Heart left ventricle (tissue), 16 donors: ENCODE measurements at regions of chr19 and their contacts with region 1.

Region 1: DNA sequence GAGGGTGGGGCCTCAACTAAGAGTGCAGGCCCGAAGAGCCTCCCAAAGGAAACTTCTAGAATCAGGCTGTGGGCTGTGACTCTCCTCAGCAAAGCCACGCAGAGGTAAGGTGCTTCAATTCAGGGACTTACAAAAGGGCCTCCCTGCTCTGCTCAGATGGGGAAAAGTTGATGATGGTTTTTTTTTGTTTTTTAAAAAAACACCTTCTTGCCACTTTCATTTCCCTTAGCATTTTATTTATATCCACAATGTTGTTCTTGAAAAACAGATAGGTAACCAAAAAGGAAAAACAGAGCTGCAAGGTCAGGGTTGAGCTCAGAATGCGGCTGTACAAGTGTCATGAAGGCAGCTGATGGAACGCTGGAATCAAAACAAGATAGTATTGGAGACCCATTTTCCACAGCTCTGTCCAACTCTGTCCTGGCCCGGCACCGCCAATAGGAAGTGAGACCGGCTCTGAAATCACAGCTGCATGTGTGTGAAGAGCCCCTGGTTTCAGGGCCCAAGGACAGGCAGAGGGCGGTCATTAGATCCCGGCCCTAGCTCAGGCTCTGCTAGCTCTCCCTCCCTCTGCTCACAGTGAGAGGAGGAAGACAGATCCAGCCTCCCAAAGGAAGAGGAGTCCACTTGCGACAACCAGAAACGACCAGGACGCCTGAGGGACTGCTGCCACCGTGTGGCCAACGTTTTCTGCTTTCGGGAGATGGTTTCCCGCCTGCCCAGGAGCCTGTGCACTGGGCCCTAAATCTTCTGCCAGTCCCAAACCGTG is 58.3 kb downstream of the KLF2 start:
- DNase-seq: peak; percentile 90 to 93 (median 91)
- ATAC-seq: peak; percentile 78 to 90 (median 86)
- H3K4me3 ChIP-seq: peak overlapping the region in 6 of 12 donors; percentile 0 to 35 (median 12)
- H3K27ac ChIP-seq: peak overlapping the region; percentile 83 to 95 (median 92)
- H3K4me1 ChIP-seq: peaks cover 12 to 61% (median 53%) of the 10 kb centered on the region in 12 donors
- H3K27me3 ChIP-seq: no peaks in the 10 kb centered on the region
- CTCF ChIP-seq: peak; percentile 69 to 96 (median 86)
- POLR2A ChIP-seq: no peak

Region 2: GRCh38 chr19:16197622-16198369 is 185.2 kb before region 1 on chr19 and contains the start of gene AP1M1:
- intact Hi-C with region 1: loop called in 1 of 10 experiments (anchors 2 kb)
- DNase-seq: peak; percentile 97 to 99 (median 99)
- ATAC-seq: peak; percentile 94 to 99 (median 96)
- H3K4me3 ChIP-seq: peak within 1 kb of the TSS; percentile 78 to 100 (median 96)
- H3K27ac ChIP-seq: peak within 1 kb of the TSS; percentile 60 to 95 (median 88)
- H3K4me1 ChIP-seq: peaks cover 4 to 36% (median 22%) of the 10 kb centered on the region in 12 donors
- H3K27me3 ChIP-seq: no peaks in the 10 kb centered on the region
- CTCF ChIP-seq: no peak
- POLR2A ChIP-seq: peak in 1 of 2 donors; percentile 53
- total RNA-seq, gene AP1M1: 39.3 to 83.8 (median 47.8) TPM

Region 3: GRCh38 chr19:16247353-16248182 is 135.4 kb before region 1 on chr19:
- intact Hi-C with region 1: loop called (anchors 1 to 2 kb)
- DNase-seq: peak; percentile 84 to 94 (median 88)
- ATAC-seq: peak; percentile 95 to 99 (median 98)
- H3K4me3 ChIP-seq: no peak overlapping the region
- H3K27ac ChIP-seq: peak overlapping the region in 5 of 12 donors; percentile 16 to 57 (median 31)
- H3K4me1 ChIP-seq: peaks cover 0 to 13% (median 2%) of the 10 kb centered on the region in 12 donors
- H3K27me3 ChIP-seq: no peaks in the 10 kb centered on the region
- CTCF ChIP-seq: peak; percentile 91 to 98 (median 95)
- POLR2A ChIP-seq: no peak

Region 4: DNA sequence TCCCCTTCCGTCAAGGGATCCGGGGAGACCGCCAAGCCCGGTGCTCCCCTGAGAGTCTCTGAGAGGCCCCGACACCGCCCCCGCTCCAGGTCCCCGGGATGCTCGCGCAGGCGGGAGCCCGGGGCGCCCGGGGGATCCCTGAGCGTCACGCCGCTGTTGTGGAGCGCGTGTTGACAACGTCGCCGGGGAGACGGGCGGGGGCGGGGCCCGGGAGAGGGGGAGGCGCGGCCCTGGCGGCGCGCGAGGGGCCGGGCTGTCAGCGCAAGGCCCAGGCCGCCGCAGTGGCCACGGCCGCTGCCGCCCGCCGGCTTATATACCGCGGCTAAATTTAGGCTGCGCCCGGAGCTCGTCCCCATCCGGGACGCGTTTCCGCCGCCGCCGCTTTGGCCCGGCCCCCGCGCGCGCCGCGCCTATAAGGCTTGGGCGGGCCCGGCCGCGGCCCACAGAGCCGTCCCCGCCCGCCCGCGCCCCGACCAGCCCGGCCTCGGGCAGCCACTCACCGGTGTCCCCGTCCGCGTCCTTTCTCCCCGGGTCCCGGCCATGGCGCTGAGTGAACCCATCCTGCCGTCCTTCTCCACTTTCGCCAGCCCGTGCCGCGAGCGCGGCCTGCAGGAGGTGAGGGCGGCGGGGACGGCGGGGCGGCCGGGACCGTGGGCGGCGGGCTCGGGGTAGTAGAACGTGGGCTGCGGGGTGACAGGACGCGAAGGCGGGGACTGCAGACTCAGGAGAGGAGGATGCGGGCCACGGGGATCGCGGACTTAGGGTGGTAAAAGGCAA is 58.4 kb before region 1 on chr19 and contains the start of gene KLF2:
- intact Hi-C with region 1: loop called in 6 of 10 experiments (anchors 2 to 5 kb)
- DNase-seq: peak; percentile 96 to 97 (median 97)
- ATAC-seq: peak; percentile 71 to 92 (median 82)
- H3K4me3 ChIP-seq: peak within 1 kb of the TSS; percentile 64 to 99 (median 83)
- H3K27ac ChIP-seq: peak within 1 kb of the TSS; percentile 92 to 99 (median 98)
- H3K4me1 ChIP-seq: peaks cover 0 to 44% (median 25%) of the 10 kb centered on the region in 12 donors
- H3K27me3 ChIP-seq: no peaks in the 10 kb centered on the region
- CTCF ChIP-seq: no peak
- POLR2A ChIP-seq: peak; percentile 85 to 98
- total RNA-seq, gene KLF2: 28.0 to 87.2 (median 45.0) TPM

Region 5: GRCh38 chr19:16330368-16330801 is 52.6 kb before region 1 on chr19:
- intact Hi-C with region 1: loop called (anchors 2 to 5 kb)
- DNase-seq: peak; percentile 75 to 88 (median 79)
- ATAC-seq: peak; percentile 33 to 56 (median 44)
- H3K4me3 ChIP-seq: peak overlapping the region in 1 of 12 donors; percentile 5
- H3K27ac ChIP-seq: peak overlapping the region in 9 of 12 donors; percentile 57 to 99 (median 92)
- H3K4me1 ChIP-seq: peaks cover 0 to 66% (median 22%) of the 10 kb centered on the region in 12 donors
- H3K27me3 ChIP-seq: no peaks in the 10 kb centered on the region
- CTCF ChIP-seq: no peak
- POLR2A ChIP-seq: peak in 1 of 2 donors; percentile 63

Region 6: GRCh38 chr19:16349551-16350152 is 33.3 kb before region 1 on chr19:
- intact Hi-C with region 1: loop called in 3 of 10 experiments (anchors 5 kb)
- DNase-seq: peak in 3 of 5 donors; percentile 6 to 54 (median 50)
- ATAC-seq: peak; percentile 15 to 70 (median 41)
- H3K4me3 ChIP-seq: no peak overlapping the region
- H3K27ac ChIP-seq: peak overlapping the region in 11 of 12 donors; percentile 66 to 90 (median 85)
- H3K4me1 ChIP-seq: peaks cover 0 to 45% (median 19%) of the 10 kb centered on the region in 12 donors
- H3K27me3 ChIP-seq: no peaks in the 10 kb centered on the region
- CTCF ChIP-seq: peak in 1 of 12 donors; percentile 7
- POLR2A ChIP-seq: no peak

Region 7: GRCh38 chr19:16400911-16401591 is 18.1 kb after region 1 on chr19:
- intact Hi-C with region 1: no loop called
- DNase-seq: peak in 1 of 5 donors; percentile 19
- ATAC-seq: no peak
- H3K4me3 ChIP-seq: no peak overlapping the region
- H3K27ac ChIP-seq: peak overlapping the region in 2 of 12 donors; percentile 4 to 42
- H3K4me1 ChIP-seq: peaks cover 0 to 39% (median 22%) of the 10 kb centered on the region in 12 donors
- H3K27me3 ChIP-seq: no peaks in the 10 kb centered on the region
- CTCF ChIP-seq: no peak
- POLR2A ChIP-seq: no peak